Prostate gland (tissue), 2 donors: ENCODE measurements at regions of chr9 and their contacts with region 1.

Region 1: DNA sequence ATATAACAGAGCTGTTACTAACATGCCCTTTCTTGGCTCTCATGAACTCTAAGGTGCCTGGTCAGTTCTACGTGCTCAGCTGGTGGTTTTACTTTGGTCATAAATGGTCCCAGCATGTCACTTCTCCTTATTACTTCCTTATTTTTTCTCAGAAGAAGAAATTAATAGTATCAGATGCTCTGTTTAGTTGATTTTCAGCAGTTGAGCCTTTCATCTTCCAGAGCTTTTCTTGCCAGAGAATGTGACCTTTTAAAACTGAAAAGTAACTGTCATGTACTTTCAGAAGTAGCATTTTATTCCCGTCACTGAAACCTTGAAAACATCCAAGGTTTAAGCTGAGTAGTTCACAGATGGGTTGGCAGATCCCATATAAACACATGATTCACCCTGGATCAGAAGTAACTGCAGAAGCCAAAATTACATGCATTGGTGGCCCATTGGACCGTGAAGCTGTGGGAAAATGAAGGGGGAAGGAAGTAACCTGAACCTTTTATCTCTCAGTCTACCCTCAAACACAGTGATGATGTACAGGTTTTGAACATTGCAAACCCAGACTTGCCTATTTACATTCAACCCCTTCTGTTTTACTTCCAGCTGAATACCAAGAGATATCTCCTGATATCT is 50.5 kb downstream of the HACD4 start:
- DNase-seq: peak; percentile 11
- H3K4me3 ChIP-seq: no peak overlapping the region
- H3K27ac ChIP-seq: peak overlapping the region; percentile 3 to 13
- H3K4me1 ChIP-seq: peaks cover 2% of the 10 kb centered on the region
- H3K27me3 ChIP-seq: no peaks in the 10 kb centered on the region
- CTCF ChIP-seq: no peak
- POLR2A ChIP-seq: no peak

Region 2: GRCh38 chr9:21031091-21031807 is 50.3 kb after region 1 on chr9 and contains the start of gene HACD4:
- intact Hi-C with region 1: loop called (anchors 2 kb)
- DNase-seq: peak; percentile 31
- H3K4me3 ChIP-seq: peak within 1 kb of the TSS; percentile 44 to 49
- H3K27ac ChIP-seq: peak within 1 kb of the TSS; percentile 66 to 72
- H3K4me1 ChIP-seq: no peaks in the 10 kb centered on the region
- H3K27me3 ChIP-seq: no peaks in the 10 kb centered on the region
- CTCF ChIP-seq: no peak
- POLR2A ChIP-seq: no peak
- total RNA-seq, gene HACD4: 2.4 to 3.1 TPM

Region 3: DNA sequence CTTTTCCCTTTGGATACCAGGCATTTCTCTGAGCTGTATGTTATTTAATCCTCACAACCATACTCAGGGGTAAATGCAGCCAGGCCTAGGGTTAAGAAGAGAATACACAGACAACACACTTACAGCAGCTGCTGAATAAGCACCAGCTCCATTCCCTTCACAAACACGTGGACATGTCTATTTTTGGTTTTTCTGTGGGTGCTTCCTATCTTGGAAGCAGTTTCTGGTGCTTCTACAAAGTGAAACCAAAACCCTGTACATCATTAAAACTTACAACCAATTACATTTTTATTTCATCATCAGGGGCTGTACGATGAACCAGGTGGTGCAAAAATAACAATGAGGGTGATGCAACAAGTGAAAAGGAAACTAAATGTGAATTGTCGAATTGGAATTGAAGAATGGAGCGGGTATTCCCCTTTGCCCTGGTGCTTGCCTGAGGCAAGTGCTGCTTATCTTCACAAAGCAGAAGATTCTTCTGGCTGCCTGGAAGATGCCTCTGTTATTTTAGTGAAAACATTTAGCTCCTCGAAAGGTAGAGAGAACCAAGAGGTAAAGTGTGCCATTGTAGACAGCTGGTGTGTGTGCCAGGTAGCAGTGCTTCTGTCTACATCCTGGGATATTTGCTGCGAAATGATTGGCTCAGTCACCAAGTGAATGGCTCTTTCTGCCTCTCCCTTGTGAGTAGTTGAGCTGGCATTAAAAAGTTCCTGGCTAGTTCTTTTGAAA is 115.4 kb after region 1 on chr9:
- intact Hi-C with region 1: loop called (anchors 10 kb)
- DNase-seq: no peak
- H3K4me3 ChIP-seq: peak overlapping the region in 1 of 2 donors; percentile 3
- H3K27ac ChIP-seq: peak overlapping the region in 1 of 2 donors; percentile 42
- H3K4me1 ChIP-seq: no peaks in the 10 kb centered on the region
- H3K27me3 ChIP-seq: no peaks in the 10 kb centered on the region
- CTCF ChIP-seq: no peak
- POLR2A ChIP-seq: no peak